Psoas muscle (tissue), 8 donors: ENCODE measurements at regions of chr20 and their contacts with region 1.

Region 1: GRCh38 chr20:48109881-48110460 is 324.7 kb upstream of the SULF2 start:
- DNase-seq: no peak
- ATAC-seq: no peak
- H3K4me3 ChIP-seq: no peak overlapping the region
- H3K27ac ChIP-seq: no peak overlapping the region
- H3K4me1 ChIP-seq: no peaks in the 10 kb centered on the region
- H3K27me3 ChIP-seq: peaks cover 0 to 4% (median 0%) of the 10 kb centered on the region in 3 donors
- CTCF ChIP-seq: no peak

Region 2: DNA sequence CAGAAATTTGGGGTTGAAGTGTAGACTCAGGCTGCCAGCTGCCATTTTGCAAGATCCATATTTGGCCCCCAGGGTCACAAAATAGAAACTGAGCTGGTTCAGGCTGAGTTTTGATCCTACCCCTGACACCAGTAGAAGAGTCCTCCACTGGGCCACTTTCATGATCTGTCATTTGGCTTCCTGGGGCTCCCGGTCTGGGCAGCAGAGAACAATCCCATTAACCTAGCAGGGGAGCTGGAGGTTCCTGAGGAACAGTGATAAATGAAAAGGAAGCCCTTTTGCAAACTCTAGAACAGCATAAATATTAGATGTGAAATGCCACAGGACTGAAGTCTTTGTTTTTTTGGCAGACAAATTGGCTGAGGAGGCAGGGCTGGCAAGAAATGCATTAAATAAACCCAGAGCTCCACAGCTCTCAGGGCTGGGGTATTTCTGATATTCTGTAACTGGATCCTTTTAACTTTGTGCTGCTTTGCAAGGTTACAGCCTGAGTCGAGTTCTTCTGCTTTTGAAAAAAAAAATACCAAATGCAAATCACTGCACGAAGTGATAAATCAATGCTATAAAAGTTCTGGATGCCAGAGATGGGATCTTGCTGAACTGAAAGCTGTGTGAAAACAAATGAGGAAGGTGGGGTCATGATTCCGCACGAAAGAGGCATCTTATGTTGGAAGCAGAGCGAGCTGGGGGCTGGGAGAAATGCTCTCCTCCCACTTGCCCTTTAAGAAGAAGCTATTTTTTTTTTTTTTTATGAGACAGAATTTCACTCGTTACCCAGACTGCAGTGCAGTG is 389.1 kb before region 1 on chr20:
- intact Hi-C with region 1: no loop called
- DNase-seq: no peak
- ATAC-seq: no peak
- H3K4me3 ChIP-seq: no peak overlapping the region
- H3K27ac ChIP-seq: no peak overlapping the region
- H3K4me1 ChIP-seq: no peaks in the 10 kb centered on the region
- H3K27me3 ChIP-seq: peaks cover 0 to 2% (median 0%) of the 10 kb centered on the region in 3 donors
- CTCF ChIP-seq: no peak

Region 3: GRCh38 chr20:47973519-47974233 is 136.3 kb before region 1 on chr20:
- intact Hi-C with region 1: no loop called
- DNase-seq: peak in 1 of 2 donors; percentile 45
- ATAC-seq: peak; percentile 9 to 63 (median 58)
- H3K4me3 ChIP-seq: no peak overlapping the region
- H3K27ac ChIP-seq: no peak overlapping the region
- H3K4me1 ChIP-seq: no peaks in the 10 kb centered on the region
- H3K27me3 ChIP-seq: peaks cover 0 to 7% (median 3%) of the 10 kb centered on the region in 3 donors
- CTCF ChIP-seq: no peak

Region 4: GRCh38 chr20:48056188-48056587 is 53.8 kb before region 1 on chr20:
- intact Hi-C with region 1: loop called in 1 of 2 experiments (anchors 2 kb)
- DNase-seq: no peak
- ATAC-seq: no peak
- H3K4me3 ChIP-seq: no peak overlapping the region
- H3K27ac ChIP-seq: no peak overlapping the region
- H3K4me1 ChIP-seq: no peaks in the 10 kb centered on the region
- H3K27me3 ChIP-seq: peaks cover 0 to 6% (median 6%) of the 10 kb centered on the region in 3 donors
- CTCF ChIP-seq: no peak